ENCODE measurements at regions of chr11 and their contacts with region 1.

Region 1: DNA sequence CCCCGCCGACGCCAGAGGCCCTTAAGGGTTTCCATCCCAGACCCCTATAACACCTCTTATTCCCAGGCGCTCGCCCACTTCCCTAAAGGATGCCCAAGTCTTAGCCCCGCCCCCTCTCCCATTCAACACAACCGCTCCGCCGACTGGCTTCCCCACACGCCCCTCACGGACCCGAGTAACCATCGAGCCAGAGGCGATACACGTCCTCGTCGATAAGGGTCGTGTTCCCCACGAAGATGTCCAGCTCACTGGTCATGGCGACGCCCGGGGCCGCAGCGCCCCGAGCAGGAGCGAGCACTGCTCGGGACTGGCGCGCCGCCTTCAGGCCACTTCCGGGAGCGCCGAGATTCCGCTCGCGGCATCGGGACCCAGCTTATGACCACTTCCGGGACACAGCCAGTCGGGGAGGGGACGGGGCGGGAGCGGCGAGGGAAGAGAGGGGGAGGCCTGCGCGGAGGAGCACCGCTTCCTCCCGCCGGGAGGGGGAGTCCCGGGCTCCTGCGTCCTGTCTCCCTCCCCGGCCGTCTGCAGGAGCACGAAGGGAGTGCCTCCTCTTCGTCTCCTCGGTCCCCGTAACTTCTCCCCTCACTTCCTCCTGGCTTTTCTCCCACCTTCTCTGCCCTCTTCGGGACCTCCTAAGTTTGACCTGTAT is at the start of gene FIBP:
- DNase-seq: peak; percentile 96
- ATAC-seq: peak; percentile 56
- H3K4me3 Mint-ChIP-seq: peak within 1 kb of the TSS; percentile 88
- H3K27ac Mint-ChIP-seq: peak within 1 kb of the TSS; percentile 99
- H3K4me1 Mint-ChIP-seq: peaks cover 46% of the 10 kb centered on the region
- H3K27me3 Mint-ChIP-seq: no peaks in the 10 kb centered on the region
- total RNA-seq, gene FIBP: 78.2 to 82.9 TPM

Region 2: GRCh38 chr11:65685981-65686380 is 202.3 kb before region 1 on chr11:
- POLR2A ChIA-PET with region 1: no interaction called
- DNase-seq: no peak
- ATAC-seq: no peak
- H3K4me3 Mint-ChIP-seq: no peak overlapping the region
- H3K27ac Mint-ChIP-seq: no peak overlapping the region
- H3K4me1 Mint-ChIP-seq: no peaks in the 10 kb centered on the region
- H3K27me3 Mint-ChIP-seq: peaks cover 15% of the 10 kb centered on the region

Region 3: DNA sequence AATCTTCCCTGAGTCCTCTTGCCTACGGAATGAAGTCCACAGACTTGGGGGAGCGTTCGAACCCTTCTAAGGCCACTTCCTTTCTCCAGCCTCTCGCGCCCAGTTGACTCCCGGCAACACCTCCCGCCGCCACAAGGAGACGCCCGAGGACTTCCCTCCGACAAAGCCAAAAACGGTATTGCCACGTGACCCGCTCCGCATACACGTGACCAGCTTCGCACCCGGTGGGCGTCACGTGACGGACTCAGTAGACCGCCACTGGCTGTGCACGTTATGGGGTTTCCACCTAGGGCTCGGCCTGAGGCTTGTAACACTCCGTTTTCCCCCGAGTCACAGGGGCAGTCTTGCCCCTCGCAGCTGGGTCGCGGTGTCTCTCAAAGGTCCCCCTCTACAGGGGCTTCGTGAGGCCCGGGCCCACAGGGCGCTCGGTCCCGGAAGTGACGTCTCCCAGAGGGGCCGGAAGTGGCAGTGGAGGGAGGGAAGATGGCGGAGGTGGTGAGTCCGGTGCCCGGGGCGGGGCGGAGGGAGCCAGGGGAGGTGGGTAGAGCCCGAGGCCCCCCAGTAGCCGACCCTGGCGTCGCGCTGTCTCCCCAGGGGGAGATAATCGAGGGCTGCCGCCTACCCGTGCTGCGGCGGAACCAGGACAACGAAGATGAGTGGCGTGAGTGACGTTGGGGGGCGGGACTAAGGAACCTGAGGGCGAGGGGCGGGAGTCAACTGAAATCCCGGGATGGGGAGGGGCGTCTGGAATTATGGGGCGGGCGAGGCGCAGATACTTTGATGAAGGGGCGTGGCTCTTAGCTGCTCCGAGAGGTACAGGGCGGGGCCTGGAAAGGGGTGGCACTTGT is 176.3 kb before region 1 on chr11 and contains the start of gene KAT5:
- POLR2A ChIA-PET with region 1: interaction called, 17 read pairs
- DNase-seq: peak; percentile 98
- ATAC-seq: peak; percentile 83
- H3K4me3 Mint-ChIP-seq: peak within 1 kb of the TSS; percentile 95
- H3K27ac Mint-ChIP-seq: peak within 1 kb of the TSS; percentile 97
- H3K4me1 Mint-ChIP-seq: peaks cover 25% of the 10 kb centered on the region
- H3K27me3 Mint-ChIP-seq: no peaks in the 10 kb centered on the region
- total RNA-seq, gene KAT5: 75.6 to 82.6 TPM

Region 4: GRCh38 chr11:65802841-65803240 is 85.4 kb before region 1 on chr11:
- POLR2A ChIA-PET with region 1: no interaction called
- DNase-seq: no peak
- ATAC-seq: no peak
- H3K4me3 Mint-ChIP-seq: no peak overlapping the region
- H3K27ac Mint-ChIP-seq: no peak overlapping the region
- H3K4me1 Mint-ChIP-seq: peaks cover 12% of the 10 kb centered on the region
- H3K27me3 Mint-ChIP-seq: peaks cover 42% of the 10 kb centered on the region

Region 5: GRCh38 chr11:65859200-65859811 is 29.0 kb before region 1 on chr11:
- POLR2A ChIA-PET with region 1: interaction called, 304 read pairs
- DNase-seq: peak; percentile 97
- ATAC-seq: peak; percentile 72
- H3K4me3 Mint-ChIP-seq: peak overlapping the region; percentile 91
- H3K27ac Mint-ChIP-seq: peak overlapping the region; percentile 98
- H3K4me1 Mint-ChIP-seq: peaks cover 37% of the 10 kb centered on the region
- H3K27me3 Mint-ChIP-seq: no peaks in the 10 kb centered on the region

Region 6: GRCh38 chr11:65900125-65900898 is 12.0 kb after region 1 on chr11 and contains the start of gene FOSL1:
- POLR2A ChIA-PET with region 1: interaction called, 108 read pairs
- DNase-seq: peak; percentile 90
- ATAC-seq: peak; percentile 92
- H3K4me3 Mint-ChIP-seq: peak within 1 kb of the TSS; percentile 72
- H3K27ac Mint-ChIP-seq: peak within 1 kb of the TSS; percentile 51
- H3K4me1 Mint-ChIP-seq: peaks cover 24% of the 10 kb centered on the region
- H3K27me3 Mint-ChIP-seq: peaks cover 8% of the 10 kb centered on the region
- total RNA-seq, gene FOSL1: 1.9 to 2.0 TPM

Region 7: DNA sequence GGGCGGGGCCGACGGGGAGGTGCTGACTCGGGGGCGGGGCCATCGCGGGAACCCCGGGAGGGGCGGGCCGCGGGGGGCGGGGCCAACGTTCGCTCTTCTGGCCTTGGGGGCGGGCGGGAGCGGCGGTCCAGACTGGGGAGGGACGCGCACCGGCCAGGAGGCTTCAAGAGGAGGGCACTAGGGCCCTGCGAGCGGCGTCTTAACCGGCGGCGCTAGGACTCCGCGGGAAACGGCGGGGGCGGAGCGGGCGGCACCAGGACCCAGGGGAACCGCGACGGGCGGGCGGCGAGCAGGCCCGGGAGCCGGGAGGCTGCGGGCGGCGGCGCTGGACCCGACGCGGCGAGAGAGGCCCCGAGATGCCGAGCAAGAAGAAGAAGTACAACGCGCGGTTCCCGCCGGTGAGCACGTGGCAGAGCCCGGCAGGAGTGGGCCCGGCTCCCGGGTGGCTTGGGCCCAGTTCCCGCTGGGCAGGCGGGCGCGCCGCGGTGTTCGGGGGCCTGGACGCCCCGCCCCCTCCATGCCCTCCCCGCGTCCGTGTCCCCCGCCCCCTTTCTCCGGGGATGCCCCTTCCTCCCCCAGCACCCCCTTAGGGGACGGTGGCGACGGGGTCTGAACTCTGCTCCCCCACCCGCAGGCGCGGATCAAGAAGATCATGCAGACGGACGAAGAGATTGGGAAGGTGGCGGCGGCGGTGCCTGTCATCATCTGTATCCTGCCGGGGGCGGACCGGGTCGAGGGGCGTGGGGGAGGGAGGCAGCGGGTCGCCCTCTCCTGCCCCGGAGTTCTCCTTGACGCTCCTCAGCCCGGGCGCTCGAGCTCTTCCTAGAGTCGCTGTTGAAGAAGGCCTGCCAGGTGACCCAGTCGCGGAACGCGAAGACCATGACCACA is 31.1 kb after region 1 on chr11 and contains the start of gene DRAP1:
- POLR2A ChIA-PET with region 1: interaction called, 170 read pairs
- DNase-seq: peak; percentile 98
- ATAC-seq: peak; percentile 92
- H3K4me3 Mint-ChIP-seq: peak within 1 kb of the TSS; percentile 98
- H3K27ac Mint-ChIP-seq: peak within 1 kb of the TSS; percentile 91
- H3K4me1 Mint-ChIP-seq: peaks cover 27% of the 10 kb centered on the region
- H3K27me3 Mint-ChIP-seq: no peaks in the 10 kb centered on the region
- total RNA-seq, gene DRAP1: 225 to 259 TPM

Region 8: GRCh38 chr11:65961232-65961901 is 73.1 kb after region 1 on chr11 and contains the start of gene SART1:
- POLR2A ChIA-PET with region 1: interaction called, 34 read pairs
- DNase-seq: peak; percentile 91
- ATAC-seq: peak; percentile 91
- H3K4me3 Mint-ChIP-seq: peak within 1 kb of the TSS; percentile 94
- H3K27ac Mint-ChIP-seq: peak within 1 kb of the TSS; percentile 97
- H3K4me1 Mint-ChIP-seq: peaks cover 38% of the 10 kb centered on the region
- H3K27me3 Mint-ChIP-seq: no peaks in the 10 kb centered on the region
- total RNA-seq, gene SART1: 79.3 to 83.5 TPM

Measured in activated naive CD8-positive, alpha-beta T cell treated with anti-CD3 and anti-CD28 coated beads, Interleukin-2, amount 10 ng/mL, durations not matched to agents 7 days and 5 days (primary cell).